IMR-90 (cell line): ENCODE measurements at regions of chr7 and their contacts with region 1.

Region 1: DNA sequence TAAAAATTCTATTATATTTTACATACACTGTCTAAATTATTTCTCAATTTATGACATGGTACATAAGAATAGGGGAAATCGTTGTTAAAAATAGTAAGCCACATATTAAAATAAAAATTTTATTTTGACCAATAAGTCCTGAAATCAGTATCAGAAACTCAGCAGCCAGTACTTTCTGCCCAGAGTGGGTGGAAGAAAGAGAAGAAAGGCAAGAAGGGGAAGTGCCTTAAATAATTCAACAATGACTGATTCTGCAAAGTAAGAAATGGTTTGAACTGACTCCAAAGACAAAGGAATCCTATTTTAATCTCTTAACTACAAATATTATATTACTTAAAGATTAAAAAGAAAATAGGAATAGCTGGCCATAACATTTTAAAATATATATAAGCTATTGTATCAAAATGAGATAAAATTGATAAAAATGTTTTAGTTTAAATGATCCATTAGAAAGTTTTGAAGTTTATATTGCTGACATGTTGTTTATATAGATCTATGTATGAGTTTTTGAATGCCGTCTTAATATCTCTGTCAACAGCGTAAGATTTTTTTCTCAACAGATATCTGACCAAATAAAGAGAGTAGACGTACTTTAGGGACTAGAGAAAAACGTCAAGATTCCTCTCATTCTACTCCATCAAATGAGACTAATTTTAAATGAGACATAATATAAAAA is 30.2 kb upstream of the NRCAM start:
- DNase-seq: peak; percentile 67
- ATAC-seq: peak; percentile 64
- H3K4me3 ChIP-seq: no peak overlapping the region
- H3K27ac ChIP-seq: no peak overlapping the region
- H3K4me1 ChIP-seq: no peaks in the 10 kb centered on the region
- H3K27me3 ChIP-seq: no peaks in the 10 kb centered on the region
- CTCF ChIP-seq: no peak
- POLR2A ChIP-seq: no peak
- RAD21 ChIP-seq: no peak

Region 2: GRCh38 chr7:108073305-108074070 is 412.9 kb before region 1 on chr7:
- CTCF ChIA-PET with region 1: no interaction called
- POLR2A ChIA-PET with region 1: interaction called, 10 read pairs
- dilution Hi-C with region 1: no loop called
- in situ Hi-C with region 1: no loop called
- intact Hi-C with region 1: no loop called
- DNase-seq: no peak
- ATAC-seq: peak; percentile 53
- H3K4me3 ChIP-seq: no peak overlapping the region
- H3K27ac ChIP-seq: no peak overlapping the region; the same call in 1 of the 2 replicates
- H3K4me1 ChIP-seq: peaks cover 10% of the 10 kb centered on the region
- H3K27me3 ChIP-seq: no peaks in the 10 kb centered on the region
- CTCF ChIP-seq: no peak
- POLR2A ChIP-seq: no peak
- RAD21 ChIP-seq: no peak

Region 3: DNA sequence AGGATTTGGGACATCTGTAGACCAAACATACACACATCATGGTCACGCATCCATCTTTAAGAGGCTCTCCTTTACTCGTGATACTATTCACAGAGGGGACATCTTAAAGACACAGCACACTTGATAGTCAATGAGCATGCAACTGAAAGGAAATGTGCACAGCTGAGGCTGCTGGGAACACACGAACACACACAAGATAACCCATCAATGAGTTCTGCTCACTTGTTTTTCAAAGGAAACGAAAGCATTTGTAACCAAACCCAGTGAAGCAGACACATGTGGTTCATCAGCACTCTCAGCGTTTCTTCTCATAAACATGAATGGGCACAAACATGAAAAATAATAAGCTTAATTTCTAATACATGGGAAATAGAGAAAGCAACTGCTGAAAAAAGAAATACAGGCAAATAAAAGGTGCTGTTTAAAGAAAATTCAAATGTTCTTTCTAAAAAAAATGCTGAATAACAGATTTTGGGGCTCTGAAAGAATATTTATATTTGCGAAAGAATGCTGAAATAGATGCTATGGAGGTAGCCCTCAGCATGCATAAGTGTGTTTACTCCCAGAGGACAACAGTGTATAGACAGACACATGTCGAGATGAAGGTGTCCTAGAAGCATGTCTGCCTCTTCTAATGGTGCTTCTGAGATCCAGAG is 296.6 kb before region 1 on chr7:
- CTCF ChIA-PET with region 1: no interaction called
- POLR2A ChIA-PET with region 1: no interaction called
- dilution Hi-C with region 1: loop called (anchors 25 kb)
- in situ Hi-C with region 1: loop called (anchors 10 kb)
- intact Hi-C with region 1: no loop called
- DNase-seq: no peak
- ATAC-seq: no peak
- H3K4me3 ChIP-seq: no peak overlapping the region
- H3K27ac ChIP-seq: no peak overlapping the region
- H3K4me1 ChIP-seq: no peaks in the 10 kb centered on the region
- H3K27me3 ChIP-seq: no peaks in the 10 kb centered on the region; the same call in 1 of the 2 replicates
- CTCF ChIP-seq: no peak
- POLR2A ChIP-seq: no peak
- RAD21 ChIP-seq: no peak

Region 4: GRCh38 chr7:108497082-108497725 is 10.8 kb after region 1 on chr7:
- CTCF ChIA-PET with region 1: interaction called, 13 read pairs
- POLR2A ChIA-PET with region 1: no interaction called
- dilution Hi-C with region 1: no loop called
- in situ Hi-C with region 1: no loop called
- intact Hi-C with region 1: no loop called
- DNase-seq: peak; percentile 52
- ATAC-seq: peak; percentile 87
- H3K4me3 ChIP-seq: no peak overlapping the region
- H3K27ac ChIP-seq: no peak overlapping the region
- H3K4me1 ChIP-seq: peaks cover 5% of the 10 kb centered on the region; the same call in 1 of the 2 replicates
- H3K27me3 ChIP-seq: no peaks in the 10 kb centered on the region
- CTCF ChIP-seq: peak; percentile 73
- POLR2A ChIP-seq: no peak
- RAD21 ChIP-seq: peak; percentile 75